WTC11 (cell line): ENCODE measurements at regions of chr18 and their contacts with region 1.

Region 1: GRCh38 chr18:50194631-50195532 is at the start of gene MYO5B:
- DNase-seq: peak; percentile 71
- ATAC-seq: peak; percentile 83
- H3K4me3 Mint-ChIP-seq: peak within 1 kb of the TSS; percentile 76
- H3K27ac Mint-ChIP-seq: no peak within 1 kb of the TSS
- H3K4me1 Mint-ChIP-seq: peaks cover 24% of the 10 kb centered on the region
- H3K27me3 Mint-ChIP-seq: peaks cover 68% of the 10 kb centered on the region
- CTCF ChIP-seq: peak; percentile 46
- total RNA-seq, gene MYO5B: 7.0 to 8.7 TPM (median 7.4 TPM) in 3 replicates

Region 2: DNA sequence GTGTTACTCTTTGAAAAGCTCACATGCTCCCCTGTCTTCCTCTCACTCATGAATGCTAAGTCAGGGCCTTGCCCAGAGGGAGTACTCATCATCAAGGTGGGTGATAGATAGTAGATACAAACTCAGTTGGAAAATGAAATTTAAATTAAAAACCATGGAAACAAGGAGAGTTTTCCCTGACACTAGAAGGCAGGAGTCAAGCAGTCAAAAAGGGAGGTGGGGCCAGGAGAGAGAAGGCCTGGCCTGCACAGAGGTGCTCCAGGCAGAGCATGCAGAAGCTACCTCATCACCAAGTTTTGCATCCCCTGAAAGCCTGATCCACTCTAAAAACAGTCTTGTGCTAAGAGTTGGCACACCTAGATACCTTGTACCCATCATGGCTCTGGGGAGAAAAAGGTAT is 143.6 kb before region 1 on chr18:
- CTCF ChIA-PET with region 1: interaction called, 10 read pairs
- POLR2A ChIA-PET with region 1: no interaction called
- DNase-seq: peak; percentile 22
- ATAC-seq: peak; percentile 86
- H3K4me3 Mint-ChIP-seq: no peak overlapping the region
- H3K27ac Mint-ChIP-seq: no peak overlapping the region
- H3K4me1 Mint-ChIP-seq: no peaks in the 10 kb centered on the region
- H3K27me3 Mint-ChIP-seq: no peaks in the 10 kb centered on the region; the same call in 1 of the 2 replicates
- CTCF ChIP-seq: no peak

Region 3: GRCh38 chr18:50218432-50219197 is 23.7 kb after region 1 on chr18:
- CTCF ChIA-PET with region 1: interaction called, 12 read pairs
- POLR2A ChIA-PET with region 1: no interaction called
- DNase-seq: peak; percentile 32
- ATAC-seq: peak; percentile 85
- H3K4me3 Mint-ChIP-seq: no peak overlapping the region
- H3K27ac Mint-ChIP-seq: no peak overlapping the region
- H3K4me1 Mint-ChIP-seq: peaks cover 3% of the 10 kb centered on the region; the same call in 1 of the 2 replicates
- H3K27me3 Mint-ChIP-seq: peaks cover 8% of the 10 kb centered on the region
- CTCF ChIP-seq: peak; percentile 11; the same call in 1 of the 2 replicates

Region 4: DNA sequence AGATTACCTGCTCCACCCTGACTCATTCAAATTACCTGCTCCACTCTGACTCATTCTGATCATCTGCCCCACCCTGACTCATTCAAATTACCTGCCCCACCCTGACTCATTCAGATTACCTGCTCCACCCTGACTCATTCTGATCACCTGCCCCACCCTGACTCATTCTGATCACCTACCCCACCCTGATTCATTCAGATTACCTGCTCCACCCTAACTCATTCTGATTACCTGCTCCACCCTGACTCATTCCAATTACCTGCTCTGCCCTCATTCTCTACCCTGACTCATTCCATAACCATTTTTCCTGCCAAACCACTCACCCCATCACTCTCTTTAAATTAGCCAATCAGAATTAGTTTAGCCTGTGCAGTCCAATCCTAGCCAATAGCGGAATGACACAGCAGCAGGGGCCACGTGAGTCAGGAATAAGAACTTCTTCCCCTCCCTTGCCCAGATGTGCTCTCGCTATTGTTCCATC is 45.2 kb after region 1 on chr18:
- CTCF ChIA-PET with region 1: no interaction called
- POLR2A ChIA-PET with region 1: no interaction called
- DNase-seq: no peak
- ATAC-seq: no peak
- H3K4me3 Mint-ChIP-seq: no peak overlapping the region
- H3K27ac Mint-ChIP-seq: no peak overlapping the region
- H3K4me1 Mint-ChIP-seq: no peaks in the 10 kb centered on the region
- H3K27me3 Mint-ChIP-seq: peaks cover 20% of the 10 kb centered on the region
- CTCF ChIP-seq: no peak